MCF 10A (cell line): ENCODE measurements at regions of chr1 and their contacts with region 1.

Region 1: GRCh38 chr1:205977402-205978014 is 25.7 kb downstream of the RAB7B start:
- DNase-seq: peak; percentile 93
- H3K4me3 Mint-ChIP-seq: no peak overlapping the region
- H3K27ac Mint-ChIP-seq: no peak overlapping the region
- H3K4me1 Mint-ChIP-seq: peaks cover 30% of the 10 kb centered on the region
- H3K27me3 Mint-ChIP-seq: peaks cover 11% of the 10 kb centered on the region
- CTCF ChIP-seq: peak; percentile 100

Region 2: GRCh38 chr1:205190845-205191577 is 786.5 kb before region 1 on chr1:
- CTCF ChIA-PET with region 1: no interaction called
- POLR2A ChIA-PET with region 1: no interaction called
- intact Hi-C with region 1: no loop called
- DNase-seq: no peak
- H3K4me3 Mint-ChIP-seq: no peak overlapping the region
- H3K27ac Mint-ChIP-seq: no peak overlapping the region
- H3K4me1 Mint-ChIP-seq: peaks cover 23% of the 10 kb centered on the region
- H3K27me3 Mint-ChIP-seq: no peaks in the 10 kb centered on the region
- CTCF ChIP-seq: no peak

Region 3: DNA sequence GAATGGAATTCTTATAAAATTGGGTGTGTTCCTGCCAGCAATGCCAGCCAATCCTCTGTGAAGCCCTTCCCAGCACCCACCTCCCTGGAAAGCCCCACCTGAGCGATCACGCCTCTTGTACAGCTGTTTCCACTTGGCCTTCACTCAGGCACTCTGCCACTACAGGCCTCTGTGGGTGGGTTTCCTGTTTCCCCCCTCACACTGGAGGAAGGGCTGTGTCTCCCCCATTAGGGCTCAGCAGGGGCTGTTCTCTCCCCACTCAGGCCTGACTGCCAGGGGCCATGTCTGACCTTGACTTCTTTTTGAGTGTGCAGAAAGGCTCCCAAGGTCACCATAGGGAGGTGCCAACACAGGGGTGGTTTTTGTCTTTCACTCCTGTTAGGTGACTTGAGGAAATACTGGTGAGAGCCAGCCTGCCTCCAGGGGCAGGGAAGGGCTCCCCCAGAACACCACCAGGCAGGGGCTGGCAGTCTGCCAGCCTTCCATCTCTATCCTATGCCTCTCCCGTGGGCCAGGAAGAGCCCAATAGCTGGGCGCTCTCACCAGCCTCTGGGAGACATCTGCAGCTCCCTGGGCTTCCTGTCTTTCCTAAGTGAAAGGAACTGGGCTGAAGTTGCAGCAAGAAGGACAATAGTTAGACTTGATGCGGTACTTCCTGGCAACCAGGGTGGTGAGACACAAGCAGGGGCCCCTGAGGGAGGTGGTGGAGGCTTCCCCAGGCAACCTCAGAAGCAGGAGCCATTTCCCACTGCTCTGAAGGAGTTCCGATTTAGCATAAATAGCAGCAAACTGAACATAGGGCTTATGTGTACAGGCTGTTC is 394.8 kb before region 1 on chr1:
- CTCF ChIA-PET with region 1: no interaction called
- POLR2A ChIA-PET with region 1: no interaction called
- intact Hi-C with region 1: no loop called
- DNase-seq: no peak
- H3K4me3 Mint-ChIP-seq: no peak overlapping the region
- H3K27ac Mint-ChIP-seq: no peak overlapping the region
- H3K4me1 Mint-ChIP-seq: peaks cover 9% of the 10 kb centered on the region
- H3K27me3 Mint-ChIP-seq: peaks cover 50% of the 10 kb centered on the region
- CTCF ChIP-seq: no peak

Region 4: GRCh38 chr1:205711104-205712020 is 266.1 kb before region 1 on chr1:
- CTCF ChIA-PET with region 1: interaction called, 18 read pairs
- POLR2A ChIA-PET with region 1: interaction called, 4 read pairs
- intact Hi-C with region 1: no loop called
- DNase-seq: peak; percentile 93
- H3K4me3 Mint-ChIP-seq: no peak overlapping the region
- H3K27ac Mint-ChIP-seq: no peak overlapping the region
- H3K4me1 Mint-ChIP-seq: peaks cover 30% of the 10 kb centered on the region
- H3K27me3 Mint-ChIP-seq: no peaks in the 10 kb centered on the region
- CTCF ChIP-seq: peak; percentile 97

Region 5: DNA sequence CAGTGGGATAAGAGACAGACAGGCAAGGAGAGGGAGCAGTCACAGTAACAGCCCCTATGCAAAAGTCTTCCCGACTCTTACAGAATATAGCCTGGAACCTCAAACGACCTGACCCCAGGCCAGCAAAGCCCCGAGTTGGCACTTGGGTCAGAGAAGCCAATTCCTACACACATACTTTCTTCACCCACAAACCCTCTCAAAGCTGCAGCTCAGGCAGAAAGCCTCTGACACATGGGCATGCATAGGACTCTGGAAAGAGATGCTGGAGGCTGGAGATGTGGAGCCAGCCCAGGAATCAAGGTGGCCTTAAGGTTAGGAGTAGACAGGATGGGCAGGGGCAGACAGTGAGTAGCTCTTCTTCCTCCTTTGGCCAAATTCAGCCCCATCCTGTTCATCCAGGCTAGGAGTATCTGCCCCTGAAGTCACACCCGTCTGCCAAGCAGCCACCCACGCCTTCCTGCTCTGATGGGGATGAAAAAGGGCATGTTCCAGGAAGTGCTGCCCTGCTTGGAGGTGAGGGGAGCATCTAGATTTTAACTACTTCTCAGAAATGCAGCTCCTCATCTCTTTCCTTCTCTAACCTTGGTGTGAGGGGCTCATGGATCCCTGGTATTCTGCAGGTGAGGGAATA is 172.3 kb before region 1 on chr1:
- CTCF ChIA-PET with region 1: interaction called, 16 read pairs
- POLR2A ChIA-PET with region 1: no interaction called
- intact Hi-C with region 1: no loop called
- DNase-seq: peak; percentile 69
- H3K4me3 Mint-ChIP-seq: no peak overlapping the region
- H3K27ac Mint-ChIP-seq: peak overlapping the region; percentile 41
- H3K4me1 Mint-ChIP-seq: peaks cover 27% of the 10 kb centered on the region
- H3K27me3 Mint-ChIP-seq: no peaks in the 10 kb centered on the region
- CTCF ChIP-seq: no peak

Region 6: GRCh38 chr1:205907794-205908193 is 69.7 kb before region 1 on chr1:
- CTCF ChIA-PET with region 1: interaction called, 911 read pairs
- POLR2A ChIA-PET with region 1: interaction called, 3 read pairs
- intact Hi-C with region 1: no loop called
- DNase-seq: peak; percentile 86
- H3K4me3 Mint-ChIP-seq: no peak overlapping the region
- H3K27ac Mint-ChIP-seq: peak overlapping the region; percentile 11
- H3K4me1 Mint-ChIP-seq: peaks cover 13% of the 10 kb centered on the region
- H3K27me3 Mint-ChIP-seq: peaks cover 28% of the 10 kb centered on the region
- CTCF ChIP-seq: peak; percentile 93

Region 7: DNA sequence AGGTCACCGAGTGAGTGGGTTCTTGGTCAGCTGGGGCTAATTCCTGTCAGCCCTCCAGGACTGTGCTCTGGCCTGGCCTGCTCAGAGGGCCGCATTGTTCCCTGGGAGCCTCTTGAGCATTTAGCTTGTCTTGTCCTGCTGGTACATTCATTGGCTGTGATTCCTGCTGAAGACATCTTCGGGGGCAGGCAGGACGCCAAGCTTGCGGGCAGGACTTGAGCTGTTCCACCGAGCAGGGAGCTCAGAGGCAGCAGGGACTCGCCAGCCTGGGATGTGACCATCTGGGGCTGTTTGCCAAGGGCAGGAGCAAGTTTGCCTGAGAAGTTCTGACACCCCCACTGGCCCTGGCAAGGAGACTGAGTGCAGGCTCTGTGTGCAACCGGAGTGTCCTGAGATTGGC is 27.2 kb before region 1 on chr1:
- CTCF ChIA-PET with region 1: interaction called, 198 read pairs
- POLR2A ChIA-PET with region 1: interaction called, 70 read pairs
- intact Hi-C with region 1: loop called (anchors 1 kb)
- DNase-seq: peak; percentile 98
- H3K4me3 Mint-ChIP-seq: peak overlapping the region; percentile 7
- H3K27ac Mint-ChIP-seq: peak overlapping the region; percentile 1
- H3K4me1 Mint-ChIP-seq: peaks cover 69% of the 10 kb centered on the region
- H3K27me3 Mint-ChIP-seq: peaks cover 68% of the 10 kb centered on the region
- CTCF ChIP-seq: no peak

Region 8: GRCh38 chr1:206001476-206001888 is 24.0 kb after region 1 on chr1:
- CTCF ChIA-PET with region 1: interaction called, 65 read pairs
- POLR2A ChIA-PET with region 1: interaction called, 89 read pairs
- intact Hi-C with region 1: no loop called
- DNase-seq: peak; percentile 99
- H3K4me3 Mint-ChIP-seq: peak overlapping the region; percentile 69
- H3K27ac Mint-ChIP-seq: peak overlapping the region; percentile 75
- H3K4me1 Mint-ChIP-seq: peaks cover 37% of the 10 kb centered on the region
- H3K27me3 Mint-ChIP-seq: no peaks in the 10 kb centered on the region
- CTCF ChIP-seq: no peak